Activated naive CD4-positive, alpha-beta T cell treated with anti-CD3 and anti-CD28 coated beads, Interleukin-2, amount 10 ng/mL, durations not matched to agents 7 days and 5 days (primary cell): ENCODE measurements at regions of chr2 and their contacts with region 1.

Region 1: DNA sequence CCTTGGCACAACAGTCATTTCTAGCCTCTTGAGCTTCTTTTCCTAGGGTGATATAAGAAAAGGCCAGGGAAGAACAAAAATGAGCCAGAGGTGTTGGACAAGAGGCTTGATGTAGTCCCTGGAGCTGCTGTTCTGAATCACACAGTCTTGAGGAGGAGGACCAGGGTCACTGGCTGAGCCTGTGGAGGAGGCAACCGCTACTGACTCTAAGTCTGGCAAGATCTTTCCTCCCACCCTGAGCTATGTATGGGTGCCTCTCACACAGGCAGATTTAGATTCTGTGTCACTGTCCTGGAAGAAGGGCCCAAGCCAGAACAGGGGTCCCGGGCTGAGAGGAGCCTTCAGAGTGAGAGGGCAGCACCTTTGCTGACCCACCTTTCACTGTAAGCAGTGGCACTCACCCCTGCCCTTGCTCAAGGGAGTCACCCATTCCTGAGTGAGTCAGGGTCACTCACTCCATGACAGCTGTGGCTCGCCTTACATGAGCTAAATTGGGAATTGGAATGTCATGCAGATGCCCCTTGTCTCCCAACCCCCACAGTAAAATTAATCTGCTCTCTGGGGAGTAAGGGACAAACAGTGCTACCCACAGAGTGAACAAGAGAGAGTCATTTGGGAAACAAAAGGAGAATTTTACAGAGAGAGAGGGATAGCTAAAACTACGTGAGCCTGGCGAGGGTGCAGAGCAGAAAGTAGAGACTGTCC is at the start of gene TRIM54:
- DNase-seq: no peak
- H3K4me3 Mint-ChIP-seq: no peak within 1 kb of the TSS
- H3K27ac Mint-ChIP-seq: peak within 1 kb of the TSS; percentile 47
- H3K4me1 Mint-ChIP-seq: peaks cover 4% of the 10 kb centered on the region
- H3K27me3 Mint-ChIP-seq: peaks cover 54% of the 10 kb centered on the region

Region 2: GRCh38 chr2:26964446-26965130 is 317.4 kb before region 1 on chr2:
- CTCF ChIA-PET with region 1: interaction called, 22 read pairs
- DNase-seq: no peak
- H3K4me3 Mint-ChIP-seq: no peak overlapping the region
- H3K27ac Mint-ChIP-seq: no peak overlapping the region
- H3K4me1 Mint-ChIP-seq: peaks cover 6% of the 10 kb centered on the region
- H3K27me3 Mint-ChIP-seq: peaks cover 50% of the 10 kb centered on the region

Region 3: GRCh38 chr2:27102329-27102728 is 179.7 kb before region 1 on chr2:
- CTCF ChIA-PET with region 1: interaction called, 28 read pairs
- DNase-seq: no peak
- H3K4me3 Mint-ChIP-seq: no peak overlapping the region
- H3K27ac Mint-ChIP-seq: no peak overlapping the region
- H3K4me1 Mint-ChIP-seq: no peaks in the 10 kb centered on the region
- H3K27me3 Mint-ChIP-seq: peaks cover 10% of the 10 kb centered on the region

Region 4: DNA sequence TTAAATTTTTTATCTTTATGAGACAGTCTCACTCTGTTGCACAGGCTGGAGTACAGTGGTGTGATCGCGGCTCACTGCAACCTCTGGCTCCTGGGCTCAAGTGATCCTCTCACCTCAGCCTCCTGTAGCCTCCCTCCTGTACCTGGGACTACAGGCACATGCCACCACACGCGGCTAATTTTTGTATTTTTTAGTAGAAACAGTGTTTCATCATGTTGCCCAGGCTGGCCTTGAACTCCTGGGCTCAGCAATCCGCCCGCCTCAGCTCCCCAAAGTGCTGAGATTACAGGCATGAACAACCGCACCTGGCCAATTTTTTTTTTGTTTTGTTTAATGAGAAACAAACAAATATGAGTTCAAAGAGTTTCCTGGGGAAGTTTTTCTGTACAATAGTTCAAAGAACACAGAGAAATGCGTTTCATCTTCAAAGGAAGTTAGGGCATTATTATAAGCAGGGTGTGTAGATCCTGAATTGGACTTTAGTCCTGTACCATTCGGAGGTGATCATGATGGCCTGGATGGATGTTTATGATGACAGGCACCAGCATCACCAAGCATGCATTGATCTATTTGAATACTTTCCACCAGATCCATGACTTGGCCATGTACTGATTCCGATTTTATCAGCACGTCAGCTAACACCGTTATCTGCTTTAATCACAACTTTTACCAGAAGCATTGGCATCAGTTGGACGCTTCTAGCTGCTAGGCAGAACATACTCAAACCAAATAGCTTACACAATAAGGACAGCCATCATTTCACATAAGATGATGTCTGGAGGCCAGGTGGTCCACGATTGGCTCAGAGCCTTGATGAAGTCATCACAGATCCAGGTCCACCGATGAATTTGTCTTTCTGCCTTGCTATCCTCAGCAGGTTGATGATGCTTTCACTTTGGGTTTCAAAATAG is 104.3 kb before region 1 on chr2:
- CTCF ChIA-PET with region 1: no interaction called
- DNase-seq: no peak
- H3K4me3 Mint-ChIP-seq: no peak overlapping the region
- H3K27ac Mint-ChIP-seq: no peak overlapping the region
- H3K4me1 Mint-ChIP-seq: peaks cover 3% of the 10 kb centered on the region
- H3K27me3 Mint-ChIP-seq: peaks cover 33% of the 10 kb centered on the region

Region 5: GRCh38 chr2:27249891-27250651 is 31.9 kb before region 1 on chr2:
- CTCF ChIA-PET with region 1: interaction called, 42 read pairs
- DNase-seq: peak; percentile 74
- H3K4me3 Mint-ChIP-seq: no peak overlapping the region
- H3K27ac Mint-ChIP-seq: no peak overlapping the region
- H3K4me1 Mint-ChIP-seq: no peaks in the 10 kb centered on the region
- H3K27me3 Mint-ChIP-seq: peaks cover 52% of the 10 kb centered on the region

Region 6: DNA sequence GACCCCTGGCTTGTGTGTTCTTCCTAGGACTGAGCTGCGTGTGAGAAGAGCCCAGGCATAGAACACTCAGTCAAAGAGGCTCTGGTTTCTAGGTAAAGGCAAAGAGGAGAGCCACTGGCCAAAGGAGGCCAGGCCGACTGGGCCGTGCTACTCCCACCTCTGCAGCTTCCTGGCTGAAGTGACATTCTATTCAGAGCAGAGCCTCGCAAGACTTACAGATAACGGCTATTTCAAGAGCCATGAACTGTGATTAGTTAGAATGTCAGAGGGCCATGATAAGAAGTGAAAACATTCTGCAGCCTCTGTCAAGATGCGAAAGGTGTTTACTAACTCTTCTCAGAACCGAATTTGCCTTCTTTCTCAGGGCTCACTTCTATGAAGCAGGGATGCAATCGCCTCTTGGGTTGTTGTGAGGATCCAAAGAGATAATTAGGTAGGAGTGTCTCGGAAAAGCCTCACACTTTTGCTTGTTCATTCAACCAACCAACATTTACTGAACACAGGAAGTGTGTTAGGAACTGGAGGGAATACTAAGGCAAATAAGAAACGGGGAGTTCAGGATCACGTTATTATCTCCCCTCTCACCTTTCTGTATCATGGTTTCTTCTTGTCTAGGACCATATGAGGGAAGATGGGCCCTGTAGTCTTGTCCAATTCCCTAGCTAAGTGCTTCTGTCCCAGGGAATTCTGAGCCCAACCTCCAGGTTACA is 10.2 kb before region 1 on chr2:
- CTCF ChIA-PET with region 1: interaction called, 14 read pairs
- DNase-seq: no peak
- H3K4me3 Mint-ChIP-seq: no peak overlapping the region
- H3K27ac Mint-ChIP-seq: no peak overlapping the region
- H3K4me1 Mint-ChIP-seq: peaks cover 3% of the 10 kb centered on the region
- H3K27me3 Mint-ChIP-seq: peaks cover 32% of the 10 kb centered on the region